Posterior vena cava (tissue), 2 donors: ENCODE measurements at regions of chr6 and their contacts with region 1.

Region 1: DNA sequence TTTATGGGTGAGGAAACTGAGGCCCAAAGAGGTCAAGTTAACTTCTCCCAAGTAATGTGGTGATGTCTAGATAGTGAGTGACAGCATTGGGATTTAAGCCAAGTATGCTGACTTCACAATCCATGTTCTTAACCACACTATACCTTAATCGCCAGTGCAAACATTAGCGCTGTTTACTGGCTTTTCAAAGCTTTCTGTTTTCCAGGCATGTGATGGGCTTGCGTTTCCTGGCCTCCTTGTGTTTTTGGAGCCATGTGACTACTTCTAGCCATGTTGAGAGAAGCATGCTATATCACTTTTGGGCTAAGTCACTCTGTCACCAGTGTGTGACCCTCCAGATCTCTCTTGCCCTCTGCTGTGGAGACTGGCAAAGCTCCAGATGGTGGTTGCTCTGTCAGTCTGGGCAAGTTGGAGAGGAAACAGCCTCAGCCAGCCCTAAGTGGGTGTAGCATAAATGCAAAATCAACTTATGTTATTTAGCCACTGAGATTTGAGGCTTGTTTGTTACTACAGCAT is 76.9 kb downstream of the ANKRD6 start:
- DNase-seq: no peak

Region 2: GRCh38 chr6:89454301-89454700 is 55.5 kb before region 1 on chr6:
- intact Hi-C with region 1: no loop called
- DNase-seq: no peak

Region 3: DNA sequence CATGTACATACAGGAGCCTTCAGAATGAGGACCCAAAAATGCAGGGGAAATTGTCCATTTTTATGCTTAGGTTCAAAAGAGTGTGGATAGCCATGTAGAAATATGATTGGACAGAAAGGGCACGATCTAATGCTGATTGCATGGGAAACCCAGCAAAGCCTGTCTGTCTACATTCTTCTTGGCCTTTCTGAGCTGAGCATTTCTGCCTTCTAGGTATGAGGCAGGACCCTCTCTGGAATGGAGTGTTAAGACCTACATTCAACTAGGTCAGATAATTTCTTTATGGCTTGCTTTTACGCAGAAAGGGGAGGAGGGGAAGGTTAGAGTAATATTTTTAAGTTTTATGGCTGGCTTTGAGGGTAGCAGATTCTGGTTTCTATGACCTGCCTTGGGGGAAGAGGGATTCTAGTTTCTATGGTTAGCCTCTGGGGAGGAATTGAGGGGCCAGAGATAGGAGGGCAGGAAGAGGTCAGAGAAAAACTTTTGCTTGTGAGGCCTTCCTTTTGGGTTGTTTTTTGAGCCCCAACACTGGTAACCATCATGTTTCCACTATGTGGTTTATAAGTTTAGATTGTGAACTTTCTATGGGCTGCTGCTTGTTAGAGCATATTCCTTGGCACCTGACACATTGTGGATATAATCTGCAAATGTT is 65.2 kb after region 1 on chr6:
- intact Hi-C with region 1: loop called in 1 of 2 experiments (anchors 1 kb)
- DNase-seq: no peak

Region 4: DNA sequence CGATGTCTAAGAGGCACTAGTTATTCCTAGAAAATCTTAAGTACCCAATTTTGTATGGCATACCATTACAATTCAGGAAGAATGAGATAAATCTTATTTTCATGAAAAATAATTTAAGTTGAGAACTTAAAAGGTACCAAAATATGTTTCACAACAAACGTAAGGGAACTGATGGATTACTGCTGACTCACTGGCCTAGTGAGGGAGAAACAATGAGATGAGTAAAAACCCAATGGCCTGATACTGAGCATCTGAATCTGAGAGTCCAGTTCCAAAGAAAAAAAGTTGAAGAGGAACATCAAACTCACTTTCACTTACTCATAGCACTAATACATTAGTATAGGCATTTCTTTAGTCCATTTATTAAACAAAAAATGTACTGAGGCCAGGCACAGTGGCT is 253.7 kb after region 1 on chr6:
- intact Hi-C with region 1: no loop called
- DNase-seq: no peak